CD14-positive monocyte (primary cell): ENCODE measurements at regions of chr22 and their contacts with region 1.

Region 1: DNA sequence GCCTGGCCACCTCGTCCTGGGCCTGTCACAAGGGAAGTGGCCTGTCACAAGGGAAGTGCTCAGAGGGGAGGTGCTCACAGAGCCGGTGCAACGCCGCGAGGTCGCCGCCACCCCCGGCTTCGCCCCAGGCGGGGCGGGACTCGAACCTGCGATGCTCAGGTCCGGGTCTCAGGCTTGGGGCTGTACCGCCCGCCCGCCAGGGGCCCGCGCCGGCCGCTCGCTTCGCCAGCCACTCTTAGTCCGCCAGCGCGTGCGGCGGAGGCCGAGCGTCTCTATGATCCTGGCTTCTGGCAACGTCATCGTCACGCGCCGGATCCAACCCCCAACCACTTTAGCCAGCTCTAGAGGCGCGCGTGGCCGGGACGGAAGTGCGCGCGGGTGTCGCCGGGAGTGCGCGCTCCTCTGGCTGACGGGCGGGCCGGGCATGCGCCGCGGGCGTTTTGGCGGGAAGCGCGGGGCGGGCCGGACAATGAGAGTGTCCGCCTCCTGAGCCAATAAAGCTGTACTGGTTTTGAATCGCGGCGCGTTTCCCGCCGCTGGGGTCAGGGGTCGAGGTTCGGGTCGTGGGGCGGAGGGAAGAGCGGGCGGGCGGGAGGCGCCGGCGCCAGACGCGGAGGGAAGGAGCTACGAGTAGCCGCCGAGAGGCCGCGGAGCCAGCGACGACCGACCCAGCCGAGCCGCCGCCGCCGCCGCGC is at the start of gene TRMT2A:
- DNase-seq: peak; percentile 97 to 99 (median 98)
- H3K4me3 ChIP-seq: peak within 1 kb of the TSS; percentile 70 to 83 (median 76)
- H3K4me3 Mint-ChIP-seq: peak within 1 kb of the TSS; percentile 80 to 90
- H3K27ac ChIP-seq: peak within 1 kb of the TSS; percentile 80 to 98
- H3K27ac Mint-ChIP-seq: peak within 1 kb of the TSS; percentile 89 to 97 (median 95)
- H3K4me1 ChIP-seq: peaks cover 21 to 33% of the 10 kb centered on the region in 2 donors
- H3K4me1 Mint-ChIP-seq: peaks cover 22% of the 10 kb centered on the region
- H3K27me3 ChIP-seq: no peaks in the 10 kb centered on the region
- H3K27me3 Mint-ChIP-seq: peaks cover 0 to 1% (median 0%) of the 10 kb centered on the region in 3 donors
- CTCF ChIP-seq: no peak
- polyA plus RNA-seq, gene TRMT2A: 20.1 to 121 (median 23.5) TPM

Region 2: GRCh38 chr22:19854778-19855503 is 262.2 kb before region 1 on chr22 and contains the starts of genes GNB1L and RTL10:
- intact Hi-C with region 1: loop called in 1 of 2 experiments (anchors 10 kb)
- DNase-seq: peak; percentile 94 to 97 (median 96)
- H3K4me3 ChIP-seq: peak within 1 kb of the TSS; percentile 55 to 97 (median 93)
- H3K4me3 Mint-ChIP-seq: peak within 1 kb of the TSS; percentile 86 to 93
- H3K27ac ChIP-seq: peak within 1 kb of the TSS; percentile 88 to 91
- H3K27ac Mint-ChIP-seq: peak within 1 kb of the TSS; percentile 84 to 94 (median 92)
- H3K4me1 ChIP-seq: peaks cover 29 to 31% of the 10 kb centered on the region in 2 donors
- H3K4me1 Mint-ChIP-seq: peaks cover 30% of the 10 kb centered on the region
- H3K27me3 ChIP-seq: no peaks in the 10 kb centered on the region
- H3K27me3 Mint-ChIP-seq: peaks cover 0 to 4% (median 1%) of the 10 kb centered on the region in 3 donors
- CTCF ChIP-seq: no peak
- polyA plus RNA-seq, gene GNB1L: 3.4 to 6.0 (median 4.8) TPM
- polyA plus RNA-seq, gene RTL10: 1.4 to 6.5 (median 1.5) TPM

Region 3: GRCh38 chr22:20079745-20080444 is 37.2 kb before region 1 on chr22 and contains the start of gene DGCR8:
- intact Hi-C with region 1: loop called in 1 of 2 experiments (anchors 2 kb)
- DNase-seq: peak; percentile 66 to 79 (median 77)
- H3K4me3 ChIP-seq: peak within 1 kb of the TSS; percentile 63 to 89 (median 76)
- H3K4me3 Mint-ChIP-seq: peak within 1 kb of the TSS; percentile 92 to 94
- H3K27ac ChIP-seq: peak within 1 kb of the TSS; percentile 43 to 66
- H3K27ac Mint-ChIP-seq: peak within 1 kb of the TSS; percentile 79 to 91 (median 85)
- H3K4me1 ChIP-seq: peaks cover 11 to 14% of the 10 kb centered on the region in 2 donors
- H3K4me1 Mint-ChIP-seq: peaks cover 37% of the 10 kb centered on the region
- H3K27me3 ChIP-seq: no peaks in the 10 kb centered on the region
- H3K27me3 Mint-ChIP-seq: no peaks in the 10 kb centered on the region
- CTCF ChIP-seq: no peak
- polyA plus RNA-seq, gene DGCR8: 1.2 to 18.7 (median 1.4) TPM

Region 4: DNA sequence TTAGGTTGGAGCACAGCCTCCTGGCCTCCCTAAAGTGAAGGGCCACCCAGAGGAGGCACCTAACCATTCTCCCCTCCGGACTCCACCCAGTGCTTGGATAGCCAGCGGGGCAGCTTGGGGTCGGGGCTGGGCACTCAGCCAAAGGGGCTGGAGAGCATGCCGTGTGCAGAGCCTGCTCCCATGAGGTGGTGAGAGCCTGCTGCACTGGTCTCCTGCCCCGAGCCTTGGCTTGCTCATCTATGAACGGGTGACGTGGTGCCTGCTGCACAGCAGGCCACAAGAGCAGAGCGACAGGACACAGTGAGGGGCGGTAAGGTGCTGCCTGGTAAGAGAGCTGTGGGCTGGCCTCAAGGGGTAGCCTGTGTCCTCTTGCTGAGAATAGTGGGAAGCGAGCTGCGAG is 47.8 kb after region 1 on chr22:
- intact Hi-C with region 1: no loop called
- DNase-seq: no peak
- H3K4me3 ChIP-seq: no peak overlapping the region
- H3K4me3 Mint-ChIP-seq: no peak overlapping the region
- H3K27ac ChIP-seq: no peak overlapping the region
- H3K27ac Mint-ChIP-seq: no peak overlapping the region
- H3K4me1 ChIP-seq: no peaks in the 10 kb centered on the region
- H3K4me1 Mint-ChIP-seq: no peaks in the 10 kb centered on the region
- H3K27me3 ChIP-seq: no peaks in the 10 kb centered on the region
- H3K27me3 Mint-ChIP-seq: peaks cover 0 to 8% (median 5%) of the 10 kb centered on the region in 3 donors
- CTCF ChIP-seq: no peak